ENCODE measurements at regions of chr12 and their contacts with region 1.

Region 1: DNA sequence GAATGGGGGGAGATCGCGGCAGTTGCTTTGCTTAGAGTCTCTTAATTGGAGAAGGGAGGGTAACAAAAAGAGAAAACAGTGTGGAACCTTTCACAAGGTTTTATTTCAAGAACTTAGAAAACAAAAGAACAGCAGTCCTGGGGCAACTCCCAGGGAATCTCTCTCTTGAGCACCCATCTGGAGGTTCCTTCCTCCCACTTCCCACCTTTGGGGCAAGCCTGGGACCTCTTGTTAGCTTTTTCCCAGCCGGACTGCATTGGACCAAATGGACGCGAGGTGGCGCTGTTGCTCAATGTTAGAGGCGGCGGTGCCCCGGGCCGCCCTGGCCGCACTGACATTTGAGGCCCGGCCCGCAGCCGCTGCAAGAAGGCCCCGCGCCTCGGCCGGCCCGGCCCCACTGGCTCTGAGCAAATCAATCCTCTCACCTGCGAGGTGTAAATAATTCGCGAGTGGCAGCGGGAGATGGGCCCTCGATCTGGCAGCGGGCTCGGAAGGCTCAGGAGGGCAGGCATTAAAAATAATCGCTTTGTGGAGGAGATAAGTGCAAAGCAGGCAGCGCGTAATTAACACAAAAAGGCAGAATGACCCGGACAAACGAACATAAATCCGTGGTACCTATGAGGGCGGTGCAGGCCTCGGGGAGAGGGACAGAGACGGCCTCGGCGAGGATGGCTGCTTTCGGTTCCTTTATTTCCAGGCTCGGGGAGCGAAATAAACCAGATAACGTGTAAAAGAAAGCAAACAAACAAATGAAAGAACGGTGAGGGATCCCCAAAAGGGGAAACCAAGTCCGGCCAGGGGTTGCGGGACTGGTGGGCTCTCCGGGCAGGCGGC is 2.7 kb upstream of the HOXC8 start:
- DNase-seq: peak; percentile 82
- CTCF ChIP-seq: peak; percentile 94

Region 2: DNA sequence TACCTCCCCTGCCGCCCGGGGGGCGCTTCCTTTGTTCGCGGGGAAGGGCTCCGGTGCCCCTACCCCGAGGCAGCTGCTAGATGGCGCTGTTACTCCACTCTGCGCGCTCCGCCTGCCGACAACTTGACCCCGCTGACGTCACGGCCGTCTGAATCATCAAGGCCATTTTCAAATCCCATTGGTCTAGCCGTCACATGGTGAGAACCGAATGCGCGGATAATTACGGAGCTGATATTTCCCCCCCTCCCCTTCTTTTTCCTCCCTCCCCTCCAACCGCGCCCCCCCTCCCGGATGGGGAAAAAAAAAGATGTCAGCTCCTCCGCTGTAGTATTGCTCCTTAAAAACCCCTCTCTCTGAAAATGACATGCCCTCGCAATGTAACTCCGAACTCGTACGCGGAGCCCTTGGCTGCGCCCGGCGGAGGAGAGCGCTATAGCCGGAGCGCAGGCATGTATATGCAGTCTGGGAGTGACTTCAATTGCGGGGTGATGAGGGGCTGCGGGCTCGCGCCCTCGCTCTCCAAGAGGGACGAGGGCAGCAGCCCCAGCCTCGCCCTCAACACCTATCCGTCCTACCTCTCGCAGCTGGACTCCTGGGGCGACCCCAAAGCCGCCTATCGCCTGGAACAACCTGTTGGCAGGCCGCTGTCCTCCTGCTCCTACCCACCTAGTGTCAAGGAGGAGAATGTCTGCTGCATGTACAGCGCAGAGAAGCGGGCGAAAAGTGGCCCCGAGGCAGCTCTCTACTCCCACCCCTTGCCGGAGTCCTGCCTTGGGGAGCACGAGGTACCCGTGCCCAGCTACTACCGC is 21.0 kb before region 1 on chr12 and contains the start of gene HOXC10:
- CTCF ChIA-PET with region 1: interaction called, 61 read pairs
- POLR2A ChIA-PET with region 1: no interaction called
- DNase-seq: peak; percentile 87
- CTCF ChIP-seq: peak; percentile 71

Region 3: DNA sequence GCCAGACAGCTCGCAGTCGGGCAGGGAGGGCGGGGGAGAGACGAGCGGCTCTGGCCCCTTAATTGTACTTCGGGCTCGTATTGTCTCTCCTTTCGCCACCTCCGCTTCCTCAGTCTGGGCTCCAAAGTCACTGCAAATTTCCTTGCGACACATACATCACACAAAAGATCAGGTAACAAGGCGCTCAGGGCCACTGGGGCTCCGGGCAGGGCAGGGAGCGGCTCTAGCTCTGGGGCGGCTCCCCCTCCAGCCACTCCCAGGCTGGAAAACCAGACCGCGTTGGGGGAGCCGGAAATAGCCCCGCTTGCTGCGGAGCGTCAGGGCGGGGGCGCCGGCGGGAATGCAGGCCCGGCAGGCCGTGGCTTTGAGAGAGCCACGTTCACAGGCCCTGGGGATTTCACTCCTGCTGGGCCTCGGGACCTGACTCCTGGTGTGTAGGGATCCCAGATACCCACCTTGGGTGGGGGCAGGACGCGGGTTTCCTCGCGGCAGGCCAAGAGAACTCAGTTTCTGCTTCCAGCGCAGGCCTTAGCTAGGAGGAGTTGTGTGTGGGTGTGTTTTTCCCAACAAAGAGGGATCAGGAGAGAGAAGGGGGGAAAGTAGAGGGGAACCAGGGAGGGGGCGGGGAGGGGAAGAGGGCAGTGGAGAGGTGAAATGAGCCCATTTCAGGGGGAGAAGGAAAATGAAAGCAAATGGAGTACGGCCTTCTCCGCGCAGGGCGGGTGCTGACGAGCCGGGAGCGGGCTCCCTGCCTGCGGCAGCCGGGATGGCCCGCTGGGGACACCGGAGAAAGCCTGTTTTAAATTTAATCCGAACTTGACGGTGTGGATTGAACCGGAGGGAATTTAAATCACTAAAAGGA is 10.5 kb before region 1 on chr12:
- CTCF ChIA-PET with region 1: interaction called, 13 read pairs
- POLR2A ChIA-PET with region 1: no interaction called
- DNase-seq: no peak
- CTCF ChIP-seq: no peak

Region 4: DNA sequence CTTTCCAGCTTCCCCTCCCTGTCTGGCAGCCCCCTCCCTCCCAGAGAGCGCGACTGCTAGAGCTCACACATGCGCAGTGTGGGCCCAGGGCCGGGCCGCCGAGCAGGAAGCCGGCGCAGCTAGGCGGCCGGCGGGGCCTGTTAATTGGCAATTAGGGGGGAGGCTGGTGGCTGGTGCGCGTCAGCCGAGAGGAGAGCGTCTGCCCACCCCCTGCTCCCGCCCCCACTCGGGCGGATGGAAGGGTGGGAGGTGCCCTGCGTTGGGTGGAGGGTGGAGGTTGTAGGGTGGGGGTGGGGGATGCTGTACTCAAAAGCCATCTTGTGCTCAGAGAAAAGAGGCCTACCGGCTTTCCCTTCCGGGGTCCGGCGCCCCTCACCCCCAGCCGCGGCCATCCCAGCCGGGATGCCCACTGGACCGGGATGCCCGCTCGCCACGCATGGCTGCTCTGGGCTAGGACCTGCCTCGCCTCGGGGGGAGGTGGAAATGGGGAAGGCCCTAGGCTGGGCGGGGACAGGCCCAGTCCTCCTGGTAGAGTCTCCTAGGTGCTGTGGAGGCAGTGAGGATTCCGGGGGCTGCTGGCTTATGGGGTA is 11.9 kb after region 1 on chr12:
- CTCF ChIA-PET with region 1: interaction called, 52 read pairs
- POLR2A ChIA-PET with region 1: no interaction called
- DNase-seq: peak; percentile 94
- CTCF ChIP-seq: no peak

Region 5: DNA sequence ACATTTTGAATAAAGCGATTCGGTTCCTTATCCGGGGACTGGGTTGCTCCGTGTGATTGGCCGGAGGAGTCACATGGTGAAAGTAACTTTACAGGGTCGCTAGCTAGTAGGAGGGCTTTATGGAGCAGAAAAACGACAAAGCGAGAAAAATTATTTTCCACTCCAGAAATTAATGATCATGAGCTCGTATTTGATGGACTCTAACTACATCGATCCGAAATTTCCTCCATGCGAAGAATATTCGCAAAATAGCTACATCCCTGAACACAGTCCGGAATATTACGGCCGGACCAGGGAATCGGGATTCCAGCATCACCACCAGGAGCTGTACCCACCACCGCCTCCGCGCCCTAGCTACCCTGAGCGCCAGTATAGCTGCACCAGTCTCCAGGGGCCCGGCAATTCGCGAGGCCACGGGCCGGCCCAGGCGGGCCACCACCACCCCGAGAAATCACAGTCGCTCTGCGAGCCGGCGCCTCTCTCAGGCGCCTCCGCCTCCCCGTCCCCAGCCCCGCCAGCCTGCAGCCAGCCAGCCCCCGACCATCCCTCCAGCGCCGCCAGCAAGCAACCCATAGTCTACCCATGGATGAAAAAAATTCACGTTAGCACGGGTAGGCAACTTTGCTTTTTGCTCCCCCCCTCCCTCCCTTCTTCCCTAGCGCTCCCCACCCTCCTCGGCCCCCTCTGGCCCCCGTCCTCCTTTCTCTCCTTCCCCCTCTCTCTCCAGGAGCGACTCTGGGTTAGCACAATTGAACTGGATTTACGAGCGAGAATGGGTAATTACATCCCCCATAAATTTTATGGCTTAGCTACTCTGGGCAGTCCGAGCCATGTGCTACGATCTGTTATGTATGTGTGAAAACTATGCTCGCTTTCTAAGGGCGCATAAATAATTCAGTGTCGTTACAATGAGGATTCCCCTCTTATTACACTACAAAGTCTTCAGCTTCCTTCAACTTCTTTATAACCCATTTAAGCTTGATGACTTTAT is 48.0 kb after region 1 on chr12 and contains the start of gene HOXC4:
- CTCF ChIA-PET with region 1: interaction called, 15 read pairs
- POLR2A ChIA-PET with region 1: no interaction called
- DNase-seq: peak; percentile 78
- CTCF ChIP-seq: no peak